Calu3 (cell line): ENCODE measurements at regions of chr15 and their contacts with region 1.

Region 1: DNA sequence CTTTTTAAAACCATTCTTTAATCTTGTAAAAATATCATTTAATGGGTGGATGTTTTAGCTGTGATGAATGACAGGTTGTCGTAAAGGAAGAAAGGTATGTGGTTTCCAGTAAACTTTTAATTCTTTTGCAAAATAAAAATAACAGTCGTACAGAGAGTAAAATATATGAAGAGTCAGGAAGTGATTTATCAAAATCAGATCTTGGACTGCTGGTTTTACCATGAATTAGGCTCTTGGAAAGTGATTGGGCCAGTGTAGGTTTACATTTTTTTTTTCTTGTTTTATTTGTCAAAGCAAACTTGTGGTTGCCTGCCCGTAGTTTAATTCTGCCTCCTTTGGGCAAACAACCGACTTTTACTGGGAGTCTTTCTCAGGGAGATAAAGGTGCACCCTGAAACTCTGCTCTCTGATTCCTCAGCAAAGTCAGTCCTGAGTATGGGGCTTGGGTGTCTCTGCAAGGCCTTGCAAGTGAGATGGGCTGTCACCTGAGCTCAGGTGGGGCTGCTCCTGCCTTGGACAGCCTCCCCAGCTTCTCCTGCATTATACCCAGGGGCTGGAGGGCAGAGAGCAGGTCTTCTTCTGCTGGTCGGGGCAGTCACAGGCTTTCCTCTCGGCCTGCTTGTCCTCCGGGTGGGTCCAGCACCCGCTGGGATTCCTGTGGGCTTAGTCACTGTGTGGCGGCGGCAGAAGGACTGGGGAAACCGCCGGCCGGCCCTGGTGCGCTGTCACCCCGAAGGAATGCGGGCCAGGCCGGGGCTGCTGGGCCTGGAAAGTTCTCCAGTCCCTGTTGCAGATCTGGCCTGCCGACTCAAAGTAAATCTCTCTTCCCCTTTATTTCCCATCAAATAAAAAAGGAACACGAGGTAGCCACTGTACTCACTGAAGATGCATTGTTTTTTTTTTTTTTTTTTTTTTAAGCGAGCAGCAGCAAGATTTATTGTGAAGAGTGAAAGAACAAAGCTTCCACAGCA is 79.1 kb downstream of the IGF1R start:
- DNase-seq: peak; percentile 97
- H3K4me3 Mint-ChIP-seq: peak overlapping the region; percentile 63
- H3K27ac Mint-ChIP-seq: no peak overlapping the region
- H3K4me1 Mint-ChIP-seq: peaks cover 71% of the 10 kb centered on the region
- H3K27me3 Mint-ChIP-seq: no peaks in the 10 kb centered on the region
- CTCF ChIP-seq: no peak

Region 2: DNA sequence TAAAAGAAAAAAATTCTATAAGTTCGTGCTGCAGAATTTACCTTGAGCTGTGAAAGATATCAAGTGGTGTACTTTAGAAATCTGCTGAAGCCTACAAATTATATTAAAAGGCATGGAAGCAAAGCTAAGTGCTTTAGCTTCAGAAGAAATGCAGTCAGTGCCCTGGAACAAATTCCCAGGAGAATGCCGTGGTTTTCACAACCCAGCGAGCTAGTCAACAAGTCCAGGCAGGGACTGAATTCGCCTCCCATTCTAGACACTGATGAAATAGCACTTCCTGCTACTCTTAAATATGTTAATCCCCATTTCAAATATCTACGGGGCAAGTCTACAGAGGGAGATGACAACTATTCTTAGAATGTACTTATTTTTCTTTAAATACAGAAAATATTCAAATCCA is 405.5 kb before region 1 on chr15:
- CTCF ChIA-PET with region 1: no interaction called
- intact Hi-C with region 1: no loop called
- DNase-seq: no peak
- H3K4me3 Mint-ChIP-seq: no peak overlapping the region
- H3K27ac Mint-ChIP-seq: no peak overlapping the region
- H3K4me1 Mint-ChIP-seq: no peaks in the 10 kb centered on the region
- H3K27me3 Mint-ChIP-seq: peaks cover under 1% of the 10 kb centered on the region
- CTCF ChIP-seq: no peak

Region 3: GRCh38 chr15:98455965-98456364 is 271.4 kb before region 1 on chr15:
- CTCF ChIA-PET with region 1: no interaction called
- intact Hi-C with region 1: no loop called
- DNase-seq: no peak
- H3K4me3 Mint-ChIP-seq: no peak overlapping the region
- H3K27ac Mint-ChIP-seq: no peak overlapping the region
- H3K4me1 Mint-ChIP-seq: no peaks in the 10 kb centered on the region
- H3K27me3 Mint-ChIP-seq: peaks cover 37% of the 10 kb centered on the region
- CTCF ChIP-seq: no peak

Region 4: GRCh38 chr15:98738689-98739401 is 11.4 kb after region 1 on chr15:
- CTCF ChIA-PET with region 1: interaction called, 10 read pairs
- intact Hi-C with region 1: loop called (anchors 1 kb)
- DNase-seq: peak; percentile 51
- H3K4me3 Mint-ChIP-seq: peak overlapping the region; percentile 29
- H3K27ac Mint-ChIP-seq: peak overlapping the region; percentile 88
- H3K4me1 Mint-ChIP-seq: peaks cover 48% of the 10 kb centered on the region
- H3K27me3 Mint-ChIP-seq: no peaks in the 10 kb centered on the region
- CTCF ChIP-seq: no peak

Region 5: GRCh38 chr15:98744506-98744905 is 17.1 kb after region 1 on chr15:
- CTCF ChIA-PET with region 1: interaction called, 10 read pairs
- intact Hi-C with region 1: loop called (anchors 1 kb)
- DNase-seq: no peak
- H3K4me3 Mint-ChIP-seq: no peak overlapping the region
- H3K27ac Mint-ChIP-seq: peak overlapping the region; percentile 88
- H3K4me1 Mint-ChIP-seq: peaks cover 76% of the 10 kb centered on the region
- H3K27me3 Mint-ChIP-seq: no peaks in the 10 kb centered on the region
- CTCF ChIP-seq: no peak